Transverse colon (tissue), 4 donors: ENCODE measurements at regions of chr2 and their contacts with region 1.

Region 1: GRCh38 chr2:152284398-152284797 is 50.6 kb upstream of the FMNL2 start:
- DNase-seq: no peak
- H3K4me3 ChIP-seq: no peak overlapping the region
- H3K27ac ChIP-seq: no peak overlapping the region
- H3K4me1 ChIP-seq: no peaks in the 10 kb centered on the region
- H3K27me3 ChIP-seq: no peaks in the 10 kb centered on the region
- CTCF ChIP-seq: no peak
- EP300 ChIP-seq: no peak
- POLR2A ChIP-seq: no peak

Region 2: GRCh38 chr2:152335010-152335725 is 50.8 kb after region 1 on chr2 and contains the start of gene FMNL2:
- in situ Hi-C with region 1: no loop called
- intact Hi-C with region 1: no loop called
- DNase-seq: peak; percentile 88
- H3K4me3 ChIP-seq: peak within 1 kb of the TSS; percentile 85 to 100 (median 88)
- H3K27ac ChIP-seq: peak within 1 kb of the TSS; percentile 86 to 94 (median 92)
- H3K4me1 ChIP-seq: peaks cover 4 to 24% (median 6%) of the 10 kb centered on the region in 4 donors
- H3K27me3 ChIP-seq: no peaks in the 10 kb centered on the region
- CTCF ChIP-seq: peak in 2 of 5 experiments; percentile 5 to 8
- EP300 ChIP-seq: no peak
- POLR2A ChIP-seq: peak; percentile 66
- total RNA-seq, gene FMNL2: 9.2 to 31.4 (median 23.9) TPM

Region 3: GRCh38 chr2:153394686-153395085 is 1110.3 kb after region 1 on chr2:
- in situ Hi-C with region 1: no loop called
- intact Hi-C with region 1: loop called (anchors 5 kb)
- DNase-seq: no peak
- H3K4me3 ChIP-seq: no peak overlapping the region
- H3K27ac ChIP-seq: no peak overlapping the region
- H3K4me1 ChIP-seq: no peaks in the 10 kb centered on the region
- H3K27me3 ChIP-seq: no peaks in the 10 kb centered on the region
- CTCF ChIP-seq: no peak
- EP300 ChIP-seq: no peak
- POLR2A ChIP-seq: no peak

Region 4: GRCh38 chr2:153944800-153945199 is 1660.4 kb after region 1 on chr2:
- in situ Hi-C with region 1: no loop called
- intact Hi-C with region 1: loop called (anchors 5 kb)
- DNase-seq: no peak
- H3K4me3 ChIP-seq: no peak overlapping the region
- H3K27ac ChIP-seq: no peak overlapping the region
- H3K4me1 ChIP-seq: no peaks in the 10 kb centered on the region
- H3K27me3 ChIP-seq: no peaks in the 10 kb centered on the region
- CTCF ChIP-seq: no peak
- EP300 ChIP-seq: no peak
- POLR2A ChIP-seq: no peak